Activated CD8-positive, alpha-beta T cell treated with anti-CD3 and anti-CD28 coated beads for 36 hours (primary cell): ENCODE measurements at regions of chr16 and their contacts with region 1.

Region 1: GRCh38 chr16:11051879-11052808 is 107.8 kb downstream of the CLEC16A start:
- DNase-seq: peak; percentile 93
- ATAC-seq: peak; percentile 86
- H3K4me3 Mint-ChIP-seq: peak overlapping the region; percentile 8
- H3K27ac Mint-ChIP-seq: peak overlapping the region; percentile 97
- H3K4me1 Mint-ChIP-seq: peaks cover 69% of the 10 kb centered on the region
- H3K27me3 Mint-ChIP-seq: no peaks in the 10 kb centered on the region
- CTCF ChIP-seq: no peak

Region 2: GRCh38 chr16:10743610-10744393 is 308.3 kb before region 1 on chr16 and contains the start of gene NUBP1:
- CTCF ChIA-PET with region 1: no interaction called
- POLR2A ChIA-PET with region 1: no interaction called
- intact Hi-C with region 1: no loop called
- DNase-seq: peak; percentile 100
- ATAC-seq: peak; percentile 96
- H3K4me3 Mint-ChIP-seq: peak within 1 kb of the TSS; percentile 76
- H3K27ac Mint-ChIP-seq: peak within 1 kb of the TSS; percentile 98
- H3K4me1 Mint-ChIP-seq: peaks cover 33% of the 10 kb centered on the region
- H3K27me3 Mint-ChIP-seq: no peaks in the 10 kb centered on the region
- CTCF ChIP-seq: no peak
- total RNA-seq, gene NUBP1: 22.8 to 23.1 TPM

Region 3: DNA sequence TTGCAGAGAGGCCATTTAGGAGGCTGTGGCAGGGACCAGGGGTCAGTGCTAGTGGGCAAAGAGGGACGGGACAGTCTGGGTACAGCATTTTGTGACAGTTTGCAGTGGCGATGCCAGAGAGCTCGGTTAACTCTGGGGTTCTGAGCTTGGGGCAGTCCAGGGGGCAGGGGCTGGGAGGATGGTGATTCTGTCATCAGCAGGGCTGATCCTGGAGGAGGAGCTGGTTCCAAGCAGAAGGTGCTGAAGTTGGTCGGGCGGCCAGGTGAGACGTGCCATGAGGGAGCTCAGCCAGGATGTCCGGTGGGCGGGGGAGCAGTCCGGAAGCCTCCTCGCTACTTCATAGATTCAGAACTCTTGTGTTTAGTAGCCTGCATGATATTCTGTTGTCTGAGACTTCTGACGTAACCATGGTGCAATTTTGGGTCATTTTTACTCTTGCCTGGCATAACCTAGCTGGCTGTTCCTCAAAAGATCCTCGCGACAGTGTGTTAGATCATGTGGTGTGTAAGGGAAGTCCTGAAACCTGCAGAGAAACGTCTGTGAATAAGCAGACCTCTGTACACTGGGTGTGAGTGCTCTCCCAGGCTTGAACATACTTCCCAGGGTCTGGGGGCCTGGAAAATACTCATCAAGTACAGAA is 14.2 kb after region 1 on chr16:
- CTCF ChIA-PET with region 1: interaction called, 24 read pairs
- POLR2A ChIA-PET with region 1: interaction called, 5 read pairs
- intact Hi-C with region 1: no loop called
- DNase-seq: peak; percentile 23
- ATAC-seq: no peak
- H3K4me3 Mint-ChIP-seq: no peak overlapping the region
- H3K27ac Mint-ChIP-seq: peak overlapping the region; percentile 34
- H3K4me1 Mint-ChIP-seq: peaks cover 17% of the 10 kb centered on the region
- H3K27me3 Mint-ChIP-seq: no peaks in the 10 kb centered on the region
- CTCF ChIP-seq: no peak

Region 4: DNA sequence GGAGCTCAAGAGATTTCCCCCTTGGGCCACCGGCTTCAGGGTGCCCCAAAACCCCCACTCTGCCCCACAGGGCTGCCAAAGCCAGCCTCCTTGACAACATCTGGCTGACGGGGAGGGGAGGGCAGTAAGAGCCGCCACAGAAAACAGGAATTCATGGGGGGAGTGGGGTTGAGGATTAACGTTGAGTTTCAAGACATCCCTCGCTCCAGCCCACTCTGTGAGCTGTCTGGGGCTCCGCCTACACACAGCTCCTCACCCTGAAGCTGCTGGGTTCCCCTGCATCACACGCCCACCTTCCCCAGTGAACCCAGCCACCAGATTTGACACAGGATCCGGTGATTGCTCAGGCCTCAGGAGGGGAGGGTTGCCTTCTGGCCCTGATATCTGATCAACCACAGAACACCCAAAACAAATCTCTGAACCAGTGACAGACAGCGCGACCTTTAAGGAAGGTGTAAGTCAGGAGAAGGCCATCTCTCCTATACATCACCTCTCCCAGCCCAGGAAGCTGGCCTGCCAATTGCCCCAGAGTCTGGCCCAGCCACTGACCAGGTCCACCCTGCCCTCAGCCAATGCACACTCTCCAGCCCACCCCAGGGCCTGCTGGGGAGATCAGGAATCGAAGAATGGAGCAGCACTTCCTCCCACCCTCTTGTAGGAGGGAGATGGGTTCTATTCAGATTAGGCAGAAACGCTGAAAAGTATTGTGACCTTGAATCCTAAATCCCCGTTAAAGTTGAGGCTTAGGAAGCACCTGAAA is 24.3 kb after region 1 on chr16:
- CTCF ChIA-PET with region 1: interaction called, 4 read pairs
- POLR2A ChIA-PET with region 1: interaction called, 5 read pairs
- intact Hi-C with region 1: loop called (anchors 1 kb)
- DNase-seq: peak; percentile 93
- ATAC-seq: peak; percentile 88
- H3K4me3 Mint-ChIP-seq: no peak overlapping the region
- H3K27ac Mint-ChIP-seq: peak overlapping the region; percentile 91
- H3K4me1 Mint-ChIP-seq: peaks cover 90% of the 10 kb centered on the region
- H3K27me3 Mint-ChIP-seq: no peaks in the 10 kb centered on the region
- CTCF ChIP-seq: no peak

Region 5: GRCh38 chr16:11105038-11105903 is 53.1 kb after region 1 on chr16:
- CTCF ChIA-PET with region 1: interaction called, 11 read pairs
- POLR2A ChIA-PET with region 1: interaction called, 14 read pairs
- intact Hi-C with region 1: no loop called
- DNase-seq: peak; percentile 61
- ATAC-seq: peak; percentile 66
- H3K4me3 Mint-ChIP-seq: peak overlapping the region; percentile 11
- H3K27ac Mint-ChIP-seq: peak overlapping the region; percentile 89
- H3K4me1 Mint-ChIP-seq: peaks cover 61% of the 10 kb centered on the region
- H3K27me3 Mint-ChIP-seq: no peaks in the 10 kb centered on the region
- CTCF ChIP-seq: no peak

Region 6: DNA sequence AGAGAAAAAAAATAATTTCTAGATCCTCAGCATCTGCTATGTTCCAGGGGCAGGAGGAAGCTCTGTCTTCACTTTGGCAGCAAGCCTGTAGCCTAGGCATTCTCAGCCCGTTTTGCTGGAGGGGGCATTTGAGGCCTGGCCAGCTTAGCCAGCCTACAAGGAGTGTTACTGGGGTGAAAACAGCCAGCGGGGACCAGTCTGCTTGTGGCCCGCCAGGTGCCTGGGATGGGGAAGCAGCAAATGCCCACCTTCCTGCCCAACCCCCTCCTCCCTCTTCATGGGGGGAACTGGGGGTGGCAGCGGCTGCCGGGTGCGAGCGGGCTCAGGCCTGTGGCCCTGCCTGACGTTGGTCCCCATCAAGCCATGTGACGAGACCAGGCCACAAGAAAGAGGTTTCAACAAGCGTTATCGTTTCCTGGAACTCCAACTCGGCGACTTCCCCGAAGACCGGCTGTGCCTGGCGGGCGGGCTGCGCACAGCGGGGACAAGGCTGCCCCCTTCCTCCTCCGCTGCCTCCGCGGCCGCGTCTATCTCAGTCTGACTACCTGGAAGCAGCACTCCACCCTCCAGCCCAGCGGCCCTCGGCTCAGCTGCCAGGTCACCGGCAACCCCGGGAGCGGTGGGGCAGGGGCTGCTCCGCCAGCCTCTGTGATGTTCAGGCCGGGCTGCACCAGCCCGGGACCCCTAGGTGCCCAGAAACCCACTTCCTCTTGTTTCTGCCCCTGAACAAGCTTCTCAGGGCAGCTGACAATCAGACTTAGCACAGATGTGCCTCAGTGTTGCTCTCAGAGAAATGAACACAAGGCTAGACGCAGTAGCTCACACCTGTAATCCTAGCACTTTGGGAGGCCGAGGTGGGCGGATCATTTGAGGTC is 180.9 kb after region 1 on chr16:
- CTCF ChIA-PET with region 1: no interaction called
- POLR2A ChIA-PET with region 1: interaction called, 11 read pairs
- intact Hi-C with region 1: no loop called
- DNase-seq: peak; percentile 97
- ATAC-seq: peak; percentile 81
- H3K4me3 Mint-ChIP-seq: peak overlapping the region; percentile 63
- H3K27ac Mint-ChIP-seq: peak overlapping the region; percentile 98
- H3K4me1 Mint-ChIP-seq: peaks cover 75% of the 10 kb centered on the region
- H3K27me3 Mint-ChIP-seq: no peaks in the 10 kb centered on the region
- CTCF ChIP-seq: no peak